GM12878 (cell line): ENCODE measurements at regions of chr4 and their contacts with region 1.

Region 1: DNA sequence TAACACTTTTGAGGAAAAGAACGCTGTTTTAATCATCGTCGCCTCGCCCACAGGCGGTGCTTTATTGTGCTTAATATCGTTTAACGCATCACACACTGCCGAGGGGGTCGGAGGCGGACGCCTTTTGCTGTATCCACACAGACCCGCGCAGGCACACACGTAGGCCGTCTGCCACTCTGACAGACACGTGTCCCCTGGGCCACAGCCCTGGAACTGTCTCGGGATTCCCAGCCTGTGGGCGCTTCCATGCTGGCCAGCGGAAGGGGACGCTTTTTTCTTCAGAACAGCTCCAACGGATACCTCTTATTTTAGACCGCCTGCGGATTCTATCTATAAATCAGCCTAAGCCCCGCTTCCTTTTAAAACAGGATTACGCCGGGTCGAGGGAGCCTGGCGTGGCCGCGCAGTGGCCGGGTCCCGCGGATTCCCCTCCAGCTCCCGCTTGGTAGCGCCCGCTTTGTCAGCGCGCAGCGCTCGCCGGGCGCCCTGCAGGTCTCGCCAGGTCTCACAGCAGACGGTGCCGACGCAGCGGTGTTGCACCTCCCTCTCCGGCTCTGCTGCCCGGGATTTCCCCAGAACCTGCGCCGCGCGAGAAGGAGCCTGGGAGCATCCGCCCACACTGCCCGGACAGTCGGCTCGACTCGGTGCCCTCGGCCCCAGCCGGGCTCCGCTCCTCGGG is at the start of gene NOCT:
- DNase-seq: peak; percentile 68
- ATAC-seq: peak; percentile 96
- H3K4me3 ChIP-seq: peak within 1 kb of the TSS; percentile 86
- H3K27ac ChIP-seq: peak within 1 kb of the TSS; percentile 93
- H3K4me1 ChIP-seq: peaks cover 7% of the 10 kb centered on the region; the same call in 1 of the 2 replicates
- H3K27me3 ChIP-seq: no peaks in the 10 kb centered on the region
- CTCF ChIP-seq: 0 out of 6 replicates have a peak, but pooled peaks of 1 of the 3 experiments have one; percentile 4
- EP300 ChIP-seq: no peak
- POLR2A ChIP-seq: peak; percentile 98
- RAD21 ChIP-seq: no peak
- polyA plus RNA-seq, gene NOCT: 1.4 to 1.6 TPM

Region 2: DNA sequence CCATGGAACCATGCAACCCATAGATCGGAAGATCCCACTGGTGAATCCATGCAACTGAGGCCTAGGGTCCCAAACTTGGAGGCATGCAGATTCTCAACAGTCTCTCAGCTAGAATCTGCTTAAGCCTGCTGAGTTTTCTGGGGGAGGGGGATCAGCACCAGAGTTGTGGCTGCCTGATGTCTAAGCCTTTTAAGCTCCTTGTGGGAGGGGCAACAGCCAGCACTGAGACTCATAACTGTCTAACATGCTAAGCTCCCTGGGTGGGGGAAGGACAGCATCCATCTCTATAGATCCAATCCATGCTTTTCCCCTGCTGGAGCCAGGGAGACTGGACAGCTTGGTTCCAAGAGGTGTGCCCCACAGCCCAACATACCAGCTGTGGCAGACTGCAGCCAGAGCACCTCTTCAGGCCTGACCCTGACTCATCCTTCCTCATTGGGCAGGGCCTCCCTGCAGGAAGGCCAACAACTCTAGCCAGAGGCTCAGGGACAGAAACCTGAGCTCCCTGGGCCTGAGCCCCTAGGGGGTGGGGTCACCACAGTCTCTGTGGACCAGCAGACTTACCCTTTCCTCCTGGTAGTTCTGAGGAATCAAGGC is 473.1 kb before region 1 on chr4:
- CTCF ChIA-PET with region 1: no interaction called
- POLR2A ChIA-PET with region 1: no interaction called
- RAD21 ChIA-PET with region 1: no interaction called
- SMC1A ChIA-PET with region 1: no interaction called
- in situ Hi-C with region 1: no loop called
- intact Hi-C with region 1: no loop called
- DNase-seq: no peak
- ATAC-seq: no peak
- H3K4me3 ChIP-seq: no peak overlapping the region
- H3K27ac ChIP-seq: no peak overlapping the region
- H3K4me1 ChIP-seq: no peaks in the 10 kb centered on the region
- H3K27me3 ChIP-seq: no peaks in the 10 kb centered on the region
- CTCF ChIP-seq: no peak
- EP300 ChIP-seq: no peak
- POLR2A ChIP-seq: no peak
- RAD21 ChIP-seq: no peak

Region 3: GRCh38 chr4:138734746-138735145 is 280.7 kb before region 1 on chr4:
- CTCF ChIA-PET with region 1: no interaction called
- POLR2A ChIA-PET with region 1: no interaction called
- RAD21 ChIA-PET with region 1: no interaction called
- SMC1A ChIA-PET with region 1: no interaction called
- in situ Hi-C with region 1: no loop called
- intact Hi-C with region 1: no loop called
- DNase-seq: no peak
- ATAC-seq: no peak
- H3K4me3 ChIP-seq: no peak overlapping the region
- H3K27ac ChIP-seq: no peak overlapping the region
- H3K4me1 ChIP-seq: no peaks in the 10 kb centered on the region
- H3K27me3 ChIP-seq: no peaks in the 10 kb centered on the region; a peak in 1 of 4 replicates
- CTCF ChIP-seq: no peak
- EP300 ChIP-seq: no peak
- POLR2A ChIP-seq: no peak
- RAD21 ChIP-seq: no peak

Region 4: DNA sequence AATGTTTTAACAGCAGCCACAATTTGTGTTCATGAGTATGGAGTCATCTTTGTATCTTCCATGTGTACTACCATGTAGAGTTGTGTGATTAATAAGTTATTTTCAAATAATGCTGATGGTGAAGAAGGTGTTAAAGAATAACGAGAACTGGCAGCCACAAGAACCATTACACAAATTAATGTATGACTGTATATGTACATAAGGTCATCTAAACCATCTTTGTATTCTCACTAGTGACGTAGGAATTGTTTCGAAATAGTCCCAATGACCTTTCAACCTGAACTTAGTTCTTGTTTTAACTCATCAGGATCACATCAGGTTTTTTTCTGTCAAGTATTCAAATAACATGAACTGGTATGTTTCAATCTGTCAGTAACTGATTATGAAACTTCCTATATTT is 48.1 kb before region 1 on chr4:
- CTCF ChIA-PET with region 1: interaction called, 4 read pairs
- POLR2A ChIA-PET with region 1: interaction called, 5 read pairs
- RAD21 ChIA-PET with region 1: interaction called, 3 read pairs
- SMC1A ChIA-PET with region 1: no interaction called
- in situ Hi-C with region 1: no loop called
- intact Hi-C with region 1: loop called (anchors 2 kb)
- DNase-seq: peak; percentile 63
- ATAC-seq: peak; percentile 98
- H3K4me3 ChIP-seq: no peak overlapping the region
- H3K27ac ChIP-seq: no peak overlapping the region
- H3K4me1 ChIP-seq: no peaks in the 10 kb centered on the region
- H3K27me3 ChIP-seq: no peaks in the 10 kb centered on the region; a peak in 1 of 4 replicates
- CTCF ChIP-seq: no peak
- EP300 ChIP-seq: peak; percentile 83 to 97; a peak in 2 of 4 replicates
- POLR2A ChIP-seq: no peak
- RAD21 ChIP-seq: no peak

Region 5: DNA sequence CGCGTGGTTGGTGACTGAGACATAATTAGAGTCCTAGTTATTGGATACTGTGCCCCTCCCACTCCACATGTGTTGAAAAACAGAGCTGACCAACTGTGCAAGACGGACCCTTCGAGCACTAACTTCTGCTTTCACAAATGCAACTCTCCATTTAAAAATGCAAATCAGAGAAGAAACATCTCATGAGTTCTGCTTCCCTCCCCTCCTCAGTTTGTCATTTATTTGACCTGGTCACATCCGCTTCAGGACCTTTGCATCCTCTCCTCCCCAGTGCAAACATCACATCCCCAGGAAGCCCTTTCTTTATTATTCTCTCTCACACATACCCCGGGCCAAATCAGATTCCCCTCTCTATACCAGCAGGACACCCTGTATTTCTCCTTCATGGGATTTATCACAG is 37.9 kb before region 1 on chr4:
- CTCF ChIA-PET with region 1: no interaction called
- POLR2A ChIA-PET with region 1: interaction called, 5 read pairs
- RAD21 ChIA-PET with region 1: no interaction called
- SMC1A ChIA-PET with region 1: interaction called, 4 read pairs
- in situ Hi-C with region 1: no loop called
- intact Hi-C with region 1: loop called (anchors 2 kb)
- DNase-seq: peak; percentile 48
- ATAC-seq: peak; percentile 94
- H3K4me3 ChIP-seq: no peak overlapping the region
- H3K27ac ChIP-seq: no peak overlapping the region
- H3K4me1 ChIP-seq: peaks cover 5% of the 10 kb centered on the region; the same call in 1 of the 2 replicates
- H3K27me3 ChIP-seq: no peaks in the 10 kb centered on the region
- CTCF ChIP-seq: no peak
- EP300 ChIP-seq: no peak
- POLR2A ChIP-seq: no peak
- RAD21 ChIP-seq: no peak

Region 6: DNA sequence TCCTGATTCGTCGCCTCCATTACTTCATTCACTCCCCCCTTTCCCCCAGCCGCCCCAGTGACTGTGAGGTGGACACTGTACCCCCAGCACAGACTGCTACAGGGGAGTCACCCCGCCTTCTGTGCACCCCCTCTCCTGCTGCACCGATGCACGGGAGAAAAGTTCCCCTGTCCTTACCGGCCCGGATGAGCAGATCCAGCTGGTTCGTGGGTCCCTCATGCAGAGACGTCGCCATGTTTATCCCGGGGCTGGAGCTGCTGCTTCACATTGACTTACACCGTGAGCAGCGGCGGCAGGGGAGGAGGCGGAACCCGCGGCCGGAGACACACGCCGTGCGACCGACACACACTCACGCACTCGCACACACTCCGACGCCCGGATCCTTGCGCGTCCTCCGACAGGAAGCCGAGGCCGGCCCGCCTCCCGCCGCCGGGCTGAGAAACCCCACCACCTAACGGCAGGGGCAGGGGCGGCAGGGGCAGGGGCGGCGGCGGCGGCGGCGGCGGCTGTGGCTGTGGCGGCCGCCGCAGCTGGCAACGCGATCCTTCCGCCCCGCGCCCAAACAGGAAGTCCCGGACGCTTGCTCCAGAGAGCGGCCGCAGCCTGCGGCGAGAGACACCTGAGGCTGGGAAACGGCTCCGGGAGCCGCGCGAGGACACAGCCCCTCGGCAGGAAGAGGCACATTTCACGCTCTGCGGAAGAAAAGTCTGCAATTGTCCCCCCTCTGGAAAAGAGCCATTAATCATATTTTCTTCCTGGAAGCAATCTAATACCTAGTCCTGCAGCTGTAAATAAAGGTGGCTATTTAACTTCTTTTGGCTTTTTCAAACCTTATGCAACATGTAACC is 68.8 kb after region 1 on chr4:
- CTCF ChIA-PET with region 1: no interaction called
- POLR2A ChIA-PET with region 1: interaction called, 5 read pairs
- RAD21 ChIA-PET with region 1: interaction called, 9 read pairs
- SMC1A ChIA-PET with region 1: interaction called, 5 read pairs
- in situ Hi-C with region 1: no loop called
- intact Hi-C with region 1: loop called (anchors 5 kb)
- DNase-seq: peak; percentile 62
- ATAC-seq: peak; percentile 77
- H3K4me3 ChIP-seq: peak overlapping the region; percentile 77
- H3K27ac ChIP-seq: peak overlapping the region; percentile 97
- H3K4me1 ChIP-seq: no peaks in the 10 kb centered on the region
- H3K27me3 ChIP-seq: no peaks in the 10 kb centered on the region
- CTCF ChIP-seq: 0 out of 6 replicates have a peak, but pooled peaks of 2 of the 3 experiments have one; percentile 2 to 32
- EP300 ChIP-seq: no peak
- POLR2A ChIP-seq: peak; percentile 87
- RAD21 ChIP-seq: no peak

Region 7: GRCh38 chr4:139453371-139454110 is 438.1 kb after region 1 on chr4:
- CTCF ChIA-PET with region 1: no interaction called
- POLR2A ChIA-PET with region 1: interaction called, 4 read pairs
- RAD21 ChIA-PET with region 1: no interaction called
- SMC1A ChIA-PET with region 1: no interaction called
- in situ Hi-C with region 1: no loop called
- intact Hi-C with region 1: loop called (anchors 5 kb)
- DNase-seq: peak; percentile 90
- ATAC-seq: peak; percentile 91
- H3K4me3 ChIP-seq: peak overlapping the region; percentile 82
- H3K27ac ChIP-seq: peak overlapping the region; percentile 78
- H3K4me1 ChIP-seq: peaks cover 12% of the 10 kb centered on the region
- H3K27me3 ChIP-seq: no peaks in the 10 kb centered on the region
- CTCF ChIP-seq: peak in 1 of 3 experiments; percentile 0; a peak in 1 of 6 replicates
- EP300 ChIP-seq: no peak; a peak in 1 of 4 replicates
- POLR2A ChIP-seq: peak; percentile 91
- RAD21 ChIP-seq: no peak